Heart left ventricle (tissue), 16 donors: ENCODE measurements at regions of chr5 and their contacts with region 1.

Region 1: GRCh38 chr5:141326088-141326854 is 4.0 kb upstream of the PCDHGA1 start:
- DNase-seq: peak; percentile 63 to 82 (median 74)
- ATAC-seq: peak; percentile 77 to 94 (median 92)
- H3K4me3 ChIP-seq: peak overlapping the region; percentile 14 to 63 (median 52)
- H3K27ac ChIP-seq: peak overlapping the region; percentile 36 to 84 (median 76)
- H3K4me1 ChIP-seq: peaks cover 0 to 9% (median 1%) of the 10 kb centered on the region in 12 donors
- H3K27me3 ChIP-seq: peaks cover 0 to 10% (median 0%) of the 10 kb centered on the region in 9 donors
- CTCF ChIP-seq: peak; percentile 37 to 71 (median 56)
- POLR2A ChIP-seq: peak in 1 of 2 donors; percentile 50

Region 2: GRCh38 chr5:141223112-141223783 is 103.0 kb before region 1 on chr5 and contains the start of gene PCDHB14:
- intact Hi-C with region 1: loop called in 1 of 10 experiments (anchors 10 kb)
- DNase-seq: no peak
- ATAC-seq: peak in 2 of 4 donors; percentile 43 to 57
- H3K4me3 ChIP-seq: peak within 1 kb of the TSS in 10 of 12 donors; percentile 15 to 43 (median 30)
- H3K27ac ChIP-seq: no peak within 1 kb of the TSS
- H3K4me1 ChIP-seq: no peaks in the 10 kb centered on the region
- H3K27me3 ChIP-seq: no peaks in the 10 kb centered on the region
- CTCF ChIP-seq: peak in 6 of 12 donors; percentile 17 to 41 (median 30)
- POLR2A ChIP-seq: no peak
- total RNA-seq, gene PCDHB14: 2.6 to 6.1 (median 4.3) TPM

Region 3: DNA sequence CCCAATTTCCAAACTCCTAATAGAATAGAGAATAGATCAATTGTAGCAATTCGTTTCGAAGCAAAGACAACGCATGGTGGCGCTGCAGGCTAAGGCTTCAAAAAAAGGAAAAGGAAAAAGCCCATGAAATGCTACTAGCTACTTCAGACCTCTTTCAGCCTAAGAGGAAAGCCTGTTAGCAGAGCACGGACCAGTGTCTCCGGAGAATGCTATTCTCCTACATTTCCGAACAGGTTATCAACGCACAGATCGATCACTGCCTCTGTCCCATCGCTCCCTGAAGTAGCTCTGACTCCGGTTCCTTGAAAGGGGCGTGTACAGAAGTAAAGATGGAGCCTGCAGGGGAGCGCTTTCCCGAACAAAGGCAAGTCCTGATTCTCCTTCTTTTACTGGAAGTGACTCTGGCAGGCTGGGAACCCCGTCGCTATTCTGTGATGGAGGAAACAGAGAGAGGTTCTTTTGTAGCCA is 81.0 kb before region 1 on chr5 and contains the start of gene PCDHB15:
- intact Hi-C with region 1: no loop called
- DNase-seq: peak in 2 of 5 donors; percentile 19 to 30
- ATAC-seq: peak; percentile 26 to 60 (median 32)
- H3K4me3 ChIP-seq: peak within 1 kb of the TSS in 11 of 12 donors; percentile 23 to 60 (median 50)
- H3K27ac ChIP-seq: peak within 1 kb of the TSS in 2 of 12 donors; percentile 18 to 62
- H3K4me1 ChIP-seq: peaks cover 0 to 2% (median 0%) of the 10 kb centered on the region in 12 donors
- H3K27me3 ChIP-seq: peaks cover 0 to 19% (median 4%) of the 10 kb centered on the region in 9 donors
- CTCF ChIP-seq: peak in 11 of 12 donors; percentile 18 to 58 (median 45)
- POLR2A ChIP-seq: no peak
- total RNA-seq, gene PCDHB15: 3.7 to 7.5 (median 4.5) TPM

Region 4: GRCh38 chr5:141412854-141413539 is 86.7 kb after region 1 on chr5 and contains the start of gene PCDHGA10:
- intact Hi-C with region 1: loop called in 1 of 10 experiments (anchors 5 kb)
- DNase-seq: peak in 3 of 5 donors; percentile 53 to 61 (median 59)
- ATAC-seq: peak; percentile 24 to 66 (median 64)
- H3K4me3 ChIP-seq: peak within 1 kb of the TSS in 10 of 12 donors; percentile 10 to 49 (median 36)
- H3K27ac ChIP-seq: peak within 1 kb of the TSS in 1 of 12 donors; percentile 36
- H3K4me1 ChIP-seq: peaks cover 0 to 4% (median 0%) of the 10 kb centered on the region in 12 donors
- H3K27me3 ChIP-seq: peaks cover 0 to 78% (median 0%) of the 10 kb centered on the region in 9 donors
- CTCF ChIP-seq: peak; percentile 26 to 60 (median 42)
- POLR2A ChIP-seq: no peak
- total RNA-seq, gene PCDHGA10: 3.3 to 11.3 (median 6.1) TPM